Psoas muscle (tissue), 8 donors: ENCODE measurements at regions of chrX and their contacts with region 1.

Region 1: GRCh38 chrX:69165087-69165651 is at the start of gene PJA1:
- DNase-seq: peak; percentile 74 to 83
- ATAC-seq: peak; percentile 83 to 97 (median 92)
- H3K4me3 ChIP-seq: peak within 1 kb of the TSS; percentile 76
- H3K27ac ChIP-seq: peak within 1 kb of the TSS; percentile 70
- H3K4me1 ChIP-seq: no peaks in the 10 kb centered on the region
- H3K27me3 ChIP-seq: peaks cover 0 to 7% (median 0%) of the 10 kb centered on the region in 3 donors
- CTCF ChIP-seq: no peak
- total RNA-seq, gene PJA1: 3.5 to 13.4 (median 5.9) TPM

Region 2: DNA sequence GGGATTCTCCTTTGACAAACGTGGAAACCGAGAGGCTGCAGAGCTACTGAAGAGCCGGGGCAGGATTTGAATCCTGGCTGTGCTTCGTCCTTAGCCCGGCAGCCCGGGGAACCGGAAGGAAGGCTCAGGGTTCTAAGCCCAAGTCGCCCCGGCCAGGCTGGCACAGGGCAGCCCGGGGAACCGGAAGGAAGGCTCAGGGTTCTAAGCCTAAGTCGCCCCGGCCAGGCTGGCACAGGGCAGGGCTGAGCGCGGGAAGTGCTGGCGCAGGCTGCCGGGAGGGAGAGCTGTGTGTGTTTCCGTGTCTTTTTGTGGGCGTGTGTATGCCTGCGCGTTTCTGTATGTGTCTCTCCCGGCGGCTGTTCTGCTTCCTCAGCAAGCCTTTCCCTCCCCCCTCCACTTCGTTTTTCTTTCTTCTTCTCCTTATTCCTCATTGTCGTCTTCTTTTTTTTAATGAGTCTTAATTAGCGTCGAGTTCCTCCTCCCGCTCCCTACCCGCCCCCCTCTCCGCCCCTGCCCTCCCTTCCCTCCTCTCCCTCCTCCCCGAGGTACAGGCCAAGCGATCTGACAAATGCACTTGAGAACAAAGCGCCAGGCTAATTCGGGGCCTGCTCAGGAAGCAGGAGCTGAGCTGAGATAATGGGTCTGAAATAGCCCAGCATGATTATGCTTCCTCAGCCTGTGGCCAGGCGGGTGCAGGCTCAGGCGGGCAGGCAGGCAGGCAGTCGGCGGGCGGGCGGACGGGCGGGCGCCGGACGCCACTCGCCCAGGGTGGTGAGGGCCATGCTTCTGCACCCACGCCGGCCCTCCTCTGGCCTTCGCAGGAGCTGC is 270.4 kb before region 1 on chrX:
- intact Hi-C with region 1: loop called in 1 of 2 experiments (anchors 10 kb)
- DNase-seq: peak; percentile 54 to 79
- ATAC-seq: peak; percentile 82 to 91 (median 88)
- H3K4me3 ChIP-seq: peak overlapping the region; percentile 50
- H3K27ac ChIP-seq: peak overlapping the region; percentile 85
- H3K4me1 ChIP-seq: peaks cover 16% of the 10 kb centered on the region
- H3K27me3 ChIP-seq: peaks cover 0 to 4% (median 0%) of the 10 kb centered on the region in 3 donors
- CTCF ChIP-seq: no peak

Region 3: DNA sequence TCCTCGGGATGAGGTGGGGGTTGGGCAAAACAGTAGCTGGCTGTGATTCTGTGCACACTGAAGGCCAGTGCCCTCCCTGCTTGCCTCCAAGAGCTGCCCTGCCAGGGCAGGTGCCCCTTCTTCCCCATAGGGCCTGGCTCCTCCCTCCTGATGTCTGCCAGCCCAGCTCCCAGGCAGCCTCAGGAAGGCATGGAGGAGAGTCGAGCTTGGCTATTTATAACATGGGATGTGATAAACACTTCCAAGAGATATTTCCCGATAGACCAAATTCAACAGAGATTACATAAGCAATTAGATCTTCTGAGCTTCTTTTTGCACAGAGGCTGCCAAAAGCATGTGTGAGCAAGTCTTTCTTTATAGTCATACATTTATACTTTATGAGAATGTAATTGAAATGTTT is 45.4 kb after region 1 on chrX:
- intact Hi-C with region 1: no loop called
- DNase-seq: no peak
- ATAC-seq: no peak
- H3K4me3 ChIP-seq: no peak overlapping the region
- H3K27ac ChIP-seq: no peak overlapping the region
- H3K4me1 ChIP-seq: no peaks in the 10 kb centered on the region
- H3K27me3 ChIP-seq: peaks cover 0 to 4% (median 0%) of the 10 kb centered on the region in 3 donors
- CTCF ChIP-seq: no peak

Region 4: GRCh38 chrX:69285881-69286564 is 120.9 kb after region 1 on chrX:
- intact Hi-C with region 1: loop called in 1 of 2 experiments (anchors 10 kb)
- DNase-seq: peak; percentile 68 to 78
- ATAC-seq: peak; percentile 76 to 91 (median 82)
- H3K4me3 ChIP-seq: peak overlapping the region; percentile 55
- H3K27ac ChIP-seq: no peak overlapping the region
- H3K4me1 ChIP-seq: peaks cover 6% of the 10 kb centered on the region
- H3K27me3 ChIP-seq: peaks cover 0 to 32% (median 0%) of the 10 kb centered on the region in 3 donors
- CTCF ChIP-seq: peak; percentile 79